ENCODE measurements at regions of chr10 and their contacts with region 1.

Region 1: GRCh38 chr10:100009793-100010676 is at the start of gene DNMBP:
- DNase-seq: peak; percentile 87
- ATAC-seq: peak; percentile 92
- H3K4me3 Mint-ChIP-seq: peak within 1 kb of the TSS; percentile 82
- H3K27ac Mint-ChIP-seq: no peak within 1 kb of the TSS
- H3K4me1 Mint-ChIP-seq: peaks cover 46% of the 10 kb centered on the region
- H3K27me3 Mint-ChIP-seq: no peaks in the 10 kb centered on the region
- CTCF ChIP-seq: peak; percentile 73
- total RNA-seq, gene DNMBP: 2.6 to 2.9 TPM

Region 2: GRCh38 chr10:99854860-99855259 is 155.2 kb before region 1 on chr10:
- CTCF ChIA-PET with region 1: interaction called, 25 read pairs
- POLR2A ChIA-PET with region 1: no interaction called
- intact Hi-C with region 1: no loop called
- DNase-seq: no peak
- ATAC-seq: no peak
- H3K4me3 Mint-ChIP-seq: no peak overlapping the region
- H3K27ac Mint-ChIP-seq: no peak overlapping the region
- H3K4me1 Mint-ChIP-seq: no peaks in the 10 kb centered on the region
- H3K27me3 Mint-ChIP-seq: peaks cover 2% of the 10 kb centered on the region
- CTCF ChIP-seq: no peak

Region 3: DNA sequence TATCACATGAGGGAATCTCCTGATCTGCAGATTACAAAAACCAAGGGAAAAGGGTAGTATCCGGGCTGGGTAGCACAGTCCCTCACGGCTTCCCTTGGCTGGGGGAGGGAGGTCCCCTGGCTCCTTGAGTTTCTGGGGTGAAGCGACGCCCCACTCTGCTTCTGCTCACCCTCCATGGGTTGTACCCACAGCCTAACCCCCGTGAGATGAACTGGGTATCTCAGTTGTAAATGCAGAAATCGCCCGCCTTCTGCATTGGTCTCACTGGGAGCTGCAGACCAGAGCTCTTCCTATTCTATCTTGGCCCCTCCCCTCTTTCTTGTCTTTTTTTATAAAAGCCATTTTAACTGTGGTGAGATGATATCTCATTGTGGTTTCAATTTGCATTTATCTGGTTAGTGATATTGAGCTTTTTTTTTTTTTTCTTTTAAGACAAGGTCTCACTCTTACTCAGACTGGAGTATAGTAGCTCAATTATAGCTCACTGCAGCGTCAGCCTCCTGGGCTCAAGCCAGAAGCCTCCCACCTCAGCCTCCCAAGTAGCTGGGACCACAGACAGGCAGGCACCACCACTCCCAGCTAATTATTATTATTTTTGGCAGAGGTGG is 139.8 kb before region 1 on chr10:
- CTCF ChIA-PET with region 1: interaction called, 21 read pairs
- POLR2A ChIA-PET with region 1: no interaction called
- intact Hi-C with region 1: no loop called
- DNase-seq: peak; percentile 71
- ATAC-seq: peak; percentile 91
- H3K4me3 Mint-ChIP-seq: peak overlapping the region; percentile 42
- H3K27ac Mint-ChIP-seq: no peak overlapping the region
- H3K4me1 Mint-ChIP-seq: peaks cover 14% of the 10 kb centered on the region
- H3K27me3 Mint-ChIP-seq: peaks cover 74% of the 10 kb centered on the region
- CTCF ChIP-seq: no peak

Region 4: DNA sequence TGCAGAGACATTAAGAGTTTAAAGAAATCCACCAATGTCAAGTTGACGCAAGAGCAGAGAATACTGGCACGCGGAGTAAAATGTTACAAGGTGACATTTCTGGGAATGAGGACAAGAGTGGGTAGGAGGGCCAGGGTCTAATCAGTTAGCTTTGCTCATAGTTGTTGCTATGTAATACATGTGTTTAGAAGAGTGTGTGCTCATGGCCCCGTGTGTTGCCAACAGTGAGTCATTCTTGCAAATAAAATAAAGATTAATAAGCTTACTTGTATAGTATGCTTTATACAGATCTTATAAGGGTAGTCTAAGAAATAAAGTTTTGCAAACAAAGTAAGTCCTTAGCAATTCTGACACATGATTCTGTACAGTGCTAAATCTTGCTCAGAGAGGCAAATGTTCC is 64.8 kb before region 1 on chr10:
- CTCF ChIA-PET with region 1: no interaction called
- POLR2A ChIA-PET with region 1: no interaction called
- intact Hi-C with region 1: no loop called
- DNase-seq: no peak
- ATAC-seq: no peak
- H3K4me3 Mint-ChIP-seq: no peak overlapping the region
- H3K27ac Mint-ChIP-seq: no peak overlapping the region
- H3K4me1 Mint-ChIP-seq: no peaks in the 10 kb centered on the region
- H3K27me3 Mint-ChIP-seq: no peaks in the 10 kb centered on the region
- CTCF ChIP-seq: no peak

Region 5: GRCh38 chr10:99976886-99977665 is 33.0 kb before region 1 on chr10:
- CTCF ChIA-PET with region 1: interaction called, 10 read pairs
- POLR2A ChIA-PET with region 1: no interaction called
- intact Hi-C with region 1: no loop called
- DNase-seq: no peak
- ATAC-seq: no peak
- H3K4me3 Mint-ChIP-seq: no peak overlapping the region
- H3K27ac Mint-ChIP-seq: no peak overlapping the region
- H3K4me1 Mint-ChIP-seq: no peaks in the 10 kb centered on the region
- H3K27me3 Mint-ChIP-seq: no peaks in the 10 kb centered on the region
- CTCF ChIP-seq: no peak

Region 6: DNA sequence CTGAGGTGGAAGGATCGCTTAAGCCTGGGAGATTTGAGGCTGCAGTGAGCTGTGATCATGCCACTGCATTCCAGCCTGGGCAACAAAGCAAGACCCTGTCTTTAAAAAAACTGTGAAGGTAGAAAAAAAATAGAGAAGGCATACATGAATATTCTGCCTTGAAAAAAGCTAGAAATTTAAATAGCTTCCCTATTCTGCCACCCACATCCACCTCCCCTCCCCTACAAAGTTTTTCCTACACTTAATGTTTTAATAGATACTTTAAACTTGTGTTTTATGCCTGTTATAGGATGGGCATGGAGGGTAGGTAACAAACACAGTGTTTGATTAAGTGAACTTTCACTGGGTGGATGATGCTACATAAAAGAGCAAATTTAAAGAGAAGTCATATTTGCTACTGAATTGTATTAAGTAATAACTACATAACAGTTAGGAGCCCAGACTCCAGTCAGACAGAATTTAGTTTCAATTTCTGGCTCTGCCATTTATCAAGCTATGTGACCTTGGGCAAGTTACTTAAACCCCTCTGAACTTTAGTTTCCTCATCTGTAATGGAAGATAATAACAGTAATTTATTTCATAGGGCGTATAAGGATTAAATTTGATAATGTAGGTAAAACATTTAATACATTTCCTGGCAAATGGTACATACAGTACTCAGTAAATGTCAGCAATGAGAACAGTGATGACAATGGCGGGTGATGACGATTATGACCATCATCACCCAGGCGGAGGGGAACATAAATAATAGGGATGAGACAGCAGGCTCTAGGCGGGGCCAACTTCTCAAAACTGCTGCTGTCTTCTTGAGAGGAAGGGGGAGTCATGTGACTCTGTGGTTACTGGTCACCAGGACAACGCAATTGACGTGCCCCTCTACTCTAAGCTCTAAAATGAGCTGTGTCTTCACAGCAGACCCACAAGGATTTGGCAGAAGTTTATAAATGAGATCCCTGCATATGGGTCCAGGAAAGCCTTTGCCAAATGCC is 16.0 kb before region 1 on chr10:
- CTCF ChIA-PET with region 1: interaction called, 83 read pairs
- POLR2A ChIA-PET with region 1: interaction called, 5 read pairs
- intact Hi-C with region 1: no loop called
- DNase-seq: peak; percentile 90
- ATAC-seq: peak; percentile 97
- H3K4me3 Mint-ChIP-seq: peak overlapping the region; percentile 23
- H3K27ac Mint-ChIP-seq: peak overlapping the region; percentile 59
- H3K4me1 Mint-ChIP-seq: peaks cover 18% of the 10 kb centered on the region
- H3K27me3 Mint-ChIP-seq: no peaks in the 10 kb centered on the region
- CTCF ChIP-seq: no peak

Region 7: DNA sequence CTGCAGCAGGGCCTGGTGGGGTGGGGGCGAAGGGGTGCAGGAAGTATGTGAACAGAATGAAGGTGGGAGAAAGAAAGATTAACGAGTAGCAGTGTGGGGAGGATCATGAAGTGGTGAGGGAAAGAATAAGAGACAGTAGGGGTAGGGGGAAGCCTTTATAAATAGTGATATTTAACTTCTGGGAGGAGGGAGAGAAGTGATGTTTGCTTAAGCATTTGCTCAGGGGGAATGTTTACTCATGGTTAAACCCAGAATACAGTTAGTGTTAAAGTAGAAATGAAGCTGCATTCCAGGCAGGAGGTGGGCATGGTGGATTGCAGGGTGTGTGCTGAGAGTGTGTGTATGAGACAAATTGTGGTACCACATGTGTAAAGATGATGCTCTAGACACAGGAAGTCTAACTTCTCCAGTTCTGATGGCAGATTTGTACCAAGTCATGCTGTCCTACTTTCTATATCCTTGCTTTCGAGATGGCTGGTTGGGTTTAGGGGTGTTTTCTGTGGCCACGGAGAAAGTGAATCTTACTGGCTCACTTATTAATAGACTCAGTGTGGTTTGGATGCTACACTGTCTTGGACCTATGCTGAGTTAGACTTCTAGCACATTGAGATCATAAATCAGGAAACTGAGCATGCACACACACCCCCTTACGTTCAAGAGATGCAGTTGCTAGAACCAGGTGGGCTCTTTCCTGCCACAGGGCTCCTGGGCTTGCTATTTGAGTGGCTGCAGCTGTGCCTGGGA is 10.3 kb after region 1 on chr10:
- CTCF ChIA-PET with region 1: interaction called, 23 read pairs
- POLR2A ChIA-PET with region 1: no interaction called
- intact Hi-C with region 1: no loop called
- DNase-seq: peak; percentile 47
- ATAC-seq: peak; percentile 91
- H3K4me3 Mint-ChIP-seq: no peak overlapping the region
- H3K27ac Mint-ChIP-seq: no peak overlapping the region
- H3K4me1 Mint-ChIP-seq: peaks cover 10% of the 10 kb centered on the region
- H3K27me3 Mint-ChIP-seq: peaks cover 6% of the 10 kb centered on the region
- CTCF ChIP-seq: no peak

Region 8: GRCh38 chr10:100046021-100046486 is 36.0 kb after region 1 on chr10:
- CTCF ChIA-PET with region 1: interaction called, 15 read pairs
- POLR2A ChIA-PET with region 1: no interaction called
- intact Hi-C with region 1: no loop called
- DNase-seq: peak; percentile 91
- ATAC-seq: peak; percentile 85
- H3K4me3 Mint-ChIP-seq: no peak overlapping the region
- H3K27ac Mint-ChIP-seq: no peak overlapping the region
- H3K4me1 Mint-ChIP-seq: no peaks in the 10 kb centered on the region
- H3K27me3 Mint-ChIP-seq: peaks cover 4% of the 10 kb centered on the region
- CTCF ChIP-seq: peak; percentile 88

Measured in activated CD8-positive, alpha-beta T cell treated with anti-CD3 and anti-CD28 coated beads for 36 hours (primary cell).